Sigmoid colon (tissue), 7 donors: ENCODE measurements at regions of chr12 and their contacts with region 1.

Region 1: GRCh38 chr12:12786716-12787601 is 1.5 kb downstream of the APOLD1 start:
- DNase-seq: peak; percentile 90
- H3K4me3 ChIP-seq: peak overlapping the region; percentile 39 to 70 (median 58)
- H3K27ac ChIP-seq: peak overlapping the region; percentile 87 to 96 (median 88)
- H3K4me1 ChIP-seq: peaks cover 0 to 39% (median 27%) of the 10 kb centered on the region in 4 donors
- H3K27me3 ChIP-seq: no peaks in the 10 kb centered on the region
- CTCF ChIP-seq: peak in 3 of 4 experiments; percentile 6 to 33 (median 22)
- EP300 ChIP-seq: no peak
- POLR2A ChIP-seq: peak; percentile 1 to 15

Region 2: DNA sequence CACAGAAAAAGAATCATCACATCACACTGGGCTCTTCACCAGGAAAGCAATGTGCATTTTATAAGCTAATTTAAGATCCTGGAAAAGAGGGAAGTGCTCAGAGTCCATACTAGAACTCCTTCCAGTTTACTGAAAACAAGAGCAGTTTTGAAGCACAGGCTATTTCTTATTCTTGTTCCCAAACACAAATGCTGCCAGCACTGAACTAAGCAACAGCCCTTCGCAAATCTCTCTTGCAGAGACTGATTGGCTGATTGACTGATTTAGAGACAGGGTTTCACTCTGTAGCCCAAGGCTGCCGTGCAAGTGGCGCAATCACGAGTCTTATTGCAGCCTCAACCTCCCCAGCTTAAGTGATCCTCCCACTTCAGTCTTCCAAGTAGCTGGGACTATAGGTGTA is 671.4 kb before region 1 on chr12:
- intact Hi-C with region 1: no loop called
- DNase-seq: no peak
- H3K4me3 ChIP-seq: no peak overlapping the region
- H3K27ac ChIP-seq: no peak overlapping the region
- H3K4me1 ChIP-seq: no peaks in the 10 kb centered on the region
- H3K27me3 ChIP-seq: no peaks in the 10 kb centered on the region
- CTCF ChIP-seq: no peak
- EP300 ChIP-seq: no peak
- POLR2A ChIP-seq: no peak

Region 3: DNA sequence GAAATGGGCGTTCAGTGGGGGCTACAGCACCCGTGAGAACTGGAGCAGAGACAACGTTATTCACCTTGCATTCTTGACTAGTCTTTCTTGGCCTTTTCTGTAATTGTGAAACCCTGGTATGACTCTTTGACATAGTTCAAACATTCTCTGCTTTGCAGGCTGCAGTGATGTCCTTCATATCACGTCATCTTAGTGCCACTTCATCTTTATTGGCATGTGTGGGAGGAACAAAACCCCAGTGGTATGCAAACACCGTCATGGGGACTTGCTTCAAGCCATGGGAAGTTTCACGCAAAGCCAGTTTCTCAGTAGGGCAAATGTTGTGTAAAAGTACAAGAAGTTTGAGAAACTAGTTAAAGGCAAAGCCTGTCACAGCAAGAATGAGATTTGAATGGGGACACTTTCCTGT is 204.1 kb before region 1 on chr12:
- intact Hi-C with region 1: no loop called
- DNase-seq: no peak
- H3K4me3 ChIP-seq: no peak overlapping the region
- H3K27ac ChIP-seq: no peak overlapping the region
- H3K4me1 ChIP-seq: no peaks in the 10 kb centered on the region
- H3K27me3 ChIP-seq: no peaks in the 10 kb centered on the region
- CTCF ChIP-seq: no peak
- EP300 ChIP-seq: no peak
- POLR2A ChIP-seq: no peak

Region 4: GRCh38 chr12:12704593-12705230 is 82.2 kb before region 1 on chr12:
- intact Hi-C with region 1: no loop called
- DNase-seq: peak; percentile 79
- H3K4me3 ChIP-seq: no peak overlapping the region
- H3K27ac ChIP-seq: peak overlapping the region in 3 of 4 donors; percentile 25 to 50 (median 43)
- H3K4me1 ChIP-seq: peaks cover 0 to 6% (median 6%) of the 10 kb centered on the region in 4 donors
- H3K27me3 ChIP-seq: no peaks in the 10 kb centered on the region
- CTCF ChIP-seq: peak; percentile 84 to 97 (median 93)
- EP300 ChIP-seq: peak in 1 of 4 donors; percentile 8
- POLR2A ChIP-seq: no peak

Region 5: DNA sequence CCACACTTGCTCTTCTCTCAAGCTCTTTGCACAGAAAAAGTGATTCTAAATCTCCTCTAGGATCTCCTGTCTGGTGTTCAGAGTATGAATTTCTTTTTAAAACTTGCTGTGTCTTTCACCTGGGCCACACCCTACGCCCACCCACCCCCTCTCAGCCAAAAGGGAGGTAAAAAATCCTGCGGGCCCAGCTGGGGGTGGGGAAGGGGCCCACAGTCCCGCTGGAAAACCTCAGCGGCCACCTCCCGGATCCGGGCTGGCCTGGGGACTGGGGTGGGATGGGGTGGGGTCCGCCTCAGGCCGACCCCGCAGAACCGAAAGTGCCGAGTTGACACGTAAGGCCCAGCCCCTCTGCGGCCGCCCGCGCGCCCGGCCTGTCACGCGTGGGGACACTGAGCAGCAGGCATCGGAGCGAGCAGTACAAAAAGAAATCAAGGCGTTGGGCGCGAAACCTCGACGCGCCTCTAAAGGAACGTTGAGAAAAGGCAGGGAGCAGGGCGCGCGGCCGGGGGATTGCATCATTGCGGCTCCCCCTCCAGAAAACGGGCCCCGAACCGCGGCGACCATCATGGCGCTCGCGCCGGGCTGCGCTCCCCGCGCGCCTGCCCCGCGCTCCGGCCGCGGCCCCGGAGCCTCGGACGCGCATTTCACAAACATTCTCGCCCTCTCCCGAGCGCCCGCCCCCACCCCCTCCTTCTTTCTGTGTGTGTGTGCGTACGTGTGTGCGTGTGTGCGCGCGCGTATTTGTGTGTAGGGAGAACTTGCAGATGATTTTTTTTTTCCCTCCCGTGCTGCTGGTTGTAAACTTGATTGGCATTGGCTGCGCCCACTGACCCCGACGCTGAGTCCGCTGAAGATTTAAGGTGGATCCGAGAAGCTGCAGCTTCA is 62.1 kb before region 1 on chr12:
- intact Hi-C with region 1: loop called (anchors 2 kb)
- DNase-seq: peak; percentile 98
- H3K4me3 ChIP-seq: peak overlapping the region; percentile 64 to 81 (median 74)
- H3K27ac ChIP-seq: peak overlapping the region; percentile 98 to 100 (median 99)
- H3K4me1 ChIP-seq: peaks cover 0 to 43% (median 33%) of the 10 kb centered on the region in 4 donors
- H3K27me3 ChIP-seq: no peaks in the 10 kb centered on the region
- CTCF ChIP-seq: no peak
- EP300 ChIP-seq: peak in 2 of 4 donors; percentile 26 to 66
- POLR2A ChIP-seq: peak; percentile 74 to 80

Region 6: GRCh38 chr12:12813120-12814101 is 26.5 kb after region 1 on chr12 and contains the start of gene DDX47:
- intact Hi-C with region 1: loop called (anchors 1 kb)
- DNase-seq: peak; percentile 97
- H3K4me3 ChIP-seq: peak within 1 kb of the TSS; percentile 67 to 83 (median 77)
- H3K27ac ChIP-seq: peak within 1 kb of the TSS; percentile 66 to 83 (median 80)
- H3K4me1 ChIP-seq: peaks cover 0 to 39% (median 33%) of the 10 kb centered on the region in 4 donors
- H3K27me3 ChIP-seq: no peaks in the 10 kb centered on the region
- CTCF ChIP-seq: peak; percentile 93 to 97 (median 95)
- EP300 ChIP-seq: no peak
- POLR2A ChIP-seq: peak; percentile 23 to 24
- total RNA-seq, gene DDX47: 42.9 to 56.9 (median 49.7) TPM

Region 7: DNA sequence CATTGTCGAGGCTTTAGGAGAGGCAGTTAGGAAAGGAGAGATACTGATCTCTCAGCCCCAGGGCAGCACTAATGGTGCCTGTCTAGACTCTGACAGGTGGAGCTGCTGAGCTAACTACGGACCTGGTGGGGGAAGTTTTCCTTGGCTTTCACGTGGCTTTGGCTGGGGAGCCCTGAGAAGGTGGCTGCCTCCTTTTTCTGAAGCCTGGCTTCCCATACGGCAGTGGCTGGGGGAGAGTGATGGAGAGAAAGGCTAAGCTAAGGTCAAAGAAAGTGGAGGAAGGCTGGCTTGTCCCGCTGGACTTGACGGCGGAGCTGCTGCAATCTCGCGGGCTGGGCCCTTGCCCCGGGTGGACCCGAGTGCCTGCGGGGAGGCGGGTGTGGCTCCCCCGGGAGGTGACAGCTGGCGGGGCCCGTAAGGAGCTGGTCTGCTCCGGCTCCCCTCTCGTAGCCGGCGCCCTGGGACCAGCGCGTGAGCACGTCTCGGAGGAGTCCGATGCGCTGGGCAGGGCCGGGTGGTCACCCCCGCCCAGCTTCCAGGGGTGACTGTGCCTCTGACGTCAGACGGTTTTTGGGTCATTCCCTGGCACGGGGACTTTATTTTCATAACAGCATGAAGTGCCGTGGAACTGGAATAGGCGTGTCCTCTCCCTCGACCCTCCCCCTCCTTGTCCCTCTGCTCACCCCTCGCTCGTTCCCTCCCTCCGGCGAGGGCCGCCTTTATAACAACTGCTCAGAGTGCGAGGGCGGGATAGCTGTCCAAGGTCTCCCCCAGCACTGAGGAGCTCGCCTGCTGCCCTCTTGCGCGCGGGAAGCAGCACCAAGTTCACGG is 104.1 kb after region 1 on chr12 and contains the start of gene GPRC5A:
- intact Hi-C with region 1: loop called (anchors 10 kb)
- DNase-seq: peak; percentile 95
- H3K4me3 ChIP-seq: peak within 1 kb of the TSS; percentile 39 to 57 (median 56)
- H3K27ac ChIP-seq: peak within 1 kb of the TSS; percentile 54 to 80 (median 64)
- H3K4me1 ChIP-seq: peaks cover 0 to 18% (median 10%) of the 10 kb centered on the region in 4 donors
- H3K27me3 ChIP-seq: peaks cover 0 to 7% (median 0%) of the 10 kb centered on the region in 3 donors
- CTCF ChIP-seq: no peak
- EP300 ChIP-seq: no peak
- POLR2A ChIP-seq: peak in 1 of 2 donors; percentile 78
- total RNA-seq, gene GPRC5A: 2.1 to 11.4 (median 2.8) TPM

Region 8: GRCh38 chr12:12983420-12984035 is 196.6 kb after region 1 on chr12:
- intact Hi-C with region 1: loop called (anchors 5 kb)
- DNase-seq: no peak
- H3K4me3 ChIP-seq: no peak overlapping the region
- H3K27ac ChIP-seq: no peak overlapping the region
- H3K4me1 ChIP-seq: peaks cover 0 to 24% (median 17%) of the 10 kb centered on the region in 4 donors
- H3K27me3 ChIP-seq: no peaks in the 10 kb centered on the region
- CTCF ChIP-seq: peak in 3 of 4 experiments; percentile 30 to 53 (median 43)
- EP300 ChIP-seq: no peak
- POLR2A ChIP-seq: no peak

Region 9: GRCh38 chr12:13211859-13212664 is 425.1 kb after region 1 on chr12:
- intact Hi-C with region 1: loop called (anchors 10 kb)
- DNase-seq: peak; percentile 76
- H3K4me3 ChIP-seq: no peak overlapping the region
- H3K27ac ChIP-seq: peak overlapping the region in 1 of 4 donors; percentile 21
- H3K4me1 ChIP-seq: peaks cover 0 to 35% (median 31%) of the 10 kb centered on the region in 4 donors
- H3K27me3 ChIP-seq: no peaks in the 10 kb centered on the region
- CTCF ChIP-seq: peak; percentile 51 to 80 (median 60)
- EP300 ChIP-seq: no peak
- POLR2A ChIP-seq: no peak